ENCODE measurements at regions of chr3 and their contacts with region 1.

Region 1: GRCh38 chr3:4978204-4978965 is 852 bp upstream of the BHLHE40 start:
- DNase-seq: peak; percentile 92
- ATAC-seq: peak; percentile 60
- H3K4me3 Mint-ChIP-seq: peak overlapping the region; percentile 98
- H3K27ac Mint-ChIP-seq: peak overlapping the region; percentile 99
- H3K4me1 Mint-ChIP-seq: peaks cover 26% of the 10 kb centered on the region
- H3K27me3 Mint-ChIP-seq: no peaks in the 10 kb centered on the region

Region 2: DNA sequence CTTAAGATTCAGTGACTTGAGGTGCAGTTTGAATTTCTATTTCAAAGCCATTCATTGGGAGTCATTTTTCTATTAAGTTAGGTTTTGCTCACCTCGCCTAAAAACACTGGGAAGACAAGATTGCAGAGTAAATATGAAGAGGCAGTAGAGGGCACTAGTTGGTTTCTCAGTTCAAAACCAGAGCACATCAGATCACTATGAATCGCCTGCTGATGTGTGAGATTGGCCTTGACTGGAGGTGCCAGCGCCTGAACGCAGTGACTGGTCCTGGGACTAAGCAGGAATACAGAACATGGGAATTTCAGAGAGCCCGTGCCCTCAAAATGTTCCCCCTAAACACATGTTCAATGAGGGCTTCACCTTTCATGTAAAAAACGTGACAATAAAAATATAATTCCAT is 256.3 kb before region 1 on chr3:
- POLR2A ChIA-PET with region 1: interaction called, 29 read pairs
- DNase-seq: no peak
- ATAC-seq: peak; percentile 82
- H3K4me3 Mint-ChIP-seq: no peak overlapping the region
- H3K27ac Mint-ChIP-seq: peak overlapping the region; percentile 75
- H3K4me1 Mint-ChIP-seq: peaks cover 45% of the 10 kb centered on the region
- H3K27me3 Mint-ChIP-seq: no peaks in the 10 kb centered on the region

Region 3: GRCh38 chr3:4826237-4827100 is 151.9 kb before region 1 on chr3:
- POLR2A ChIA-PET with region 1: interaction called, 489 read pairs
- DNase-seq: no peak
- ATAC-seq: no peak
- H3K4me3 Mint-ChIP-seq: peak overlapping the region; percentile 86
- H3K27ac Mint-ChIP-seq: peak overlapping the region; percentile 92
- H3K4me1 Mint-ChIP-seq: peaks cover 91% of the 10 kb centered on the region
- H3K27me3 Mint-ChIP-seq: no peaks in the 10 kb centered on the region

Region 4: GRCh38 chr3:4845882-4846281 is 132.5 kb before region 1 on chr3:
- POLR2A ChIA-PET with region 1: interaction called, 154 read pairs
- DNase-seq: no peak
- ATAC-seq: peak; percentile 59
- H3K4me3 Mint-ChIP-seq: peak overlapping the region; percentile 59
- H3K27ac Mint-ChIP-seq: peak overlapping the region; percentile 90
- H3K4me1 Mint-ChIP-seq: peaks cover 84% of the 10 kb centered on the region
- H3K27me3 Mint-ChIP-seq: no peaks in the 10 kb centered on the region

Region 5: DNA sequence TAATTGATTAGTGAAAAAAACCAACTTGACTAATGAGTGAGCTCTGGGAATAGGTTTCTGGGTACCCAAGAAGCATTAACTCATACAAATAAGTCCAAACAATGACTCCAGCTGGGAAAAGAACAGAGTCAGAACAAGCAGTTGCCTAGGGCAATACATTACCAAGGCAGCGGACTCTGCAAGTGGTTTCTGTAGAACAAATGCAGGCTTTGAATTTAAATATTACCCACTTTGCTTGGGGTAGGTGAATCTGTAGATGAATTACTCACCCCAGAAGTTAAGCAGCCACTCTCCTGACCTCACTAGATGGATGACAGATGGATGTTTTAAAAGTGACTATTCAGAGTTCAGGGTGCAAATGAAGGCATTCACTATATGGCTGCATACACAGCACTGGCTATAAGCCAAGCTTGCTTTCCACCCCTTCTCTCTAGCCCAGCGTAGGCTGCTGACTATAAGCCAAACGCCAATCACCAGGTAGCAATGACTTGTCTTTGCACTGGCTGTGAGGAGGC is 72.2 kb before region 1 on chr3:
- POLR2A ChIA-PET with region 1: interaction called, 20 read pairs
- DNase-seq: no peak
- ATAC-seq: peak; percentile 39
- H3K4me3 Mint-ChIP-seq: no peak overlapping the region
- H3K27ac Mint-ChIP-seq: peak overlapping the region; percentile 17
- H3K4me1 Mint-ChIP-seq: peaks cover 59% of the 10 kb centered on the region
- H3K27me3 Mint-ChIP-seq: no peaks in the 10 kb centered on the region

Region 6: DNA sequence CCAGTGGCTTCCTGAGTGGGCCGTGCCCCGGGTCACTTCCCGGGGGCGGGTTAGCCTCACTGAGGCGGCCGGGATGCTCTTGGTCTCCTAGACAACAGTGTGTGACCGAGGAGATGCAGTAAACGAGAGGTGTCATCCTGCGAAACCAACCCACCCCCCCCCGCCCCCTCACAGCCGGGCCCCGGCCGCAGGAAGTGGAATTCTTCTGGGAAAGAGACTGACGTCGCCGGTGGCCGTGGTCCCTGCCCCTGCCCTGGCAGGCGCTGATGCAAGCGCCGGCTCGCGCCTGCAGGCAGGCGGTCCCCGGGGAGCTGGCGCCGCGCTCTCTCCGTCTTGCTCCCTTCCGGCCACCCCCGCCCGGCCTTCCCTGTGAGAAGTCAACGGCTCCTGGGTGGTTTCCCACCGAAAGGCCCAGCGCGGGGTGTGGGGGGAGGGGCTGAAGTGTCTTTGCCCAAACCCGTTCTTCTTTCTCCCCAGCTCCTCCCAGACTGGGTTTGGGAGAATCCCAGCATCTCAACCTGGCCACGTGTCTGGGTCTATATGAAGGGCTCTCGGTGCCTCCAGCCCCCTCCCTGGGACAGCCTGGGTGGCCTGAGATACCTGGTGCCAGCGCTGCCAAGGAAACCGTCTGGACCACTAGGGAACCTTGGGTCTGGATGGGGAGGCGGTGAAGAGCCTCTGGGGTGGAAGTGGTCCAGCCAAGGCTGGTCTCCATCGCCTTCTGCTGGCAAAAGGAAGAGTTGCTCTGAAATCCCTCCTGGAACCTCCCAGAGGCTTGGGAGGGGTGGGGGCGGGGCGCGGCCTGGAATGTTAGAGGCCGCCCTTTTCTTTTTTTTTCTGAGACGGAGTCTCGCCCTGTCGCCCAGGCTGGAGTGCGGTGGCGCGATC is 48.2 kb after region 1 on chr3:
- POLR2A ChIA-PET with region 1: interaction called, 734 read pairs
- DNase-seq: peak; percentile 75
- ATAC-seq: peak; percentile 76
- H3K4me3 Mint-ChIP-seq: peak overlapping the region; percentile 83
- H3K27ac Mint-ChIP-seq: peak overlapping the region; percentile 88
- H3K4me1 Mint-ChIP-seq: peaks cover 33% of the 10 kb centered on the region
- H3K27me3 Mint-ChIP-seq: no peaks in the 10 kb centered on the region

Measured in activated naive CD8-positive, alpha-beta T cell treated with anti-CD3 and anti-CD28 coated beads, Interleukin-2, amount 10 ng/mL, durations not matched to agents 7 days and 5 days (primary cell).